Esophagus squamous epithelium (tissue), 5 donors: ENCODE measurements at regions of chr11 and their contacts with region 1.

Region 1: GRCh38 chr11:65418711-65419459 is 3.7 kb upstream of the NEAT1 start:
- DNase-seq: peak; percentile 94
- H3K4me3 ChIP-seq: peak overlapping the region; percentile 5 to 95 (median 84)
- H3K27ac ChIP-seq: peak overlapping the region; percentile 99 to 100 (median 100)
- H3K4me1 ChIP-seq: peaks cover 44 to 65% (median 50%) of the 10 kb centered on the region in 3 donors
- H3K27me3 ChIP-seq: no peaks in the 10 kb centered on the region
- CTCF ChIP-seq: peak in 2 of 6 experiments; percentile 3 to 4
- POLR2A ChIP-seq: peak in 3 of 4 donors; percentile 13 to 88 (median 80)

Region 2: GRCh38 chr11:65095974-65096806 is 322.7 kb before region 1 on chr11 and contains the start of gene VPS51:
- intact Hi-C with region 1: no loop called
- DNase-seq: peak; percentile 54
- H3K4me3 ChIP-seq: peak within 1 kb of the TSS; percentile 87 to 98 (median 92)
- H3K27ac ChIP-seq: peak within 1 kb of the TSS; percentile 94 to 97 (median 95)
- H3K4me1 ChIP-seq: peaks cover 17 to 34% (median 18%) of the 10 kb centered on the region in 3 donors
- H3K27me3 ChIP-seq: no peaks in the 10 kb centered on the region
- CTCF ChIP-seq: peak in 4 of 6 experiments; percentile 20 to 76 (median 31)
- POLR2A ChIP-seq: peak in 3 of 4 donors; percentile 34 to 84 (median 62)
- total RNA-seq, gene VPS51: 204 to 298 (median 224) TPM

Region 3: GRCh38 chr11:65382033-65382807 is 36.7 kb before region 1 on chr11 and contains the start of gene SLC25A45:
- intact Hi-C with region 1: loop called (anchors 5 kb)
- DNase-seq: peak; percentile 68
- H3K4me3 ChIP-seq: peak within 1 kb of the TSS; percentile 23 to 68 (median 46)
- H3K27ac ChIP-seq: peak within 1 kb of the TSS; percentile 95 to 99 (median 98)
- H3K4me1 ChIP-seq: peaks cover 34 to 83% (median 59%) of the 10 kb centered on the region in 3 donors
- H3K27me3 ChIP-seq: no peaks in the 10 kb centered on the region
- CTCF ChIP-seq: peak; percentile 73 to 98 (median 96)
- POLR2A ChIP-seq: peak in 3 of 4 donors; percentile 38 to 76 (median 59)
- total RNA-seq, gene SLC25A45: 1.9 to 7.7 (median 4.0) TPM

Region 4: DNA sequence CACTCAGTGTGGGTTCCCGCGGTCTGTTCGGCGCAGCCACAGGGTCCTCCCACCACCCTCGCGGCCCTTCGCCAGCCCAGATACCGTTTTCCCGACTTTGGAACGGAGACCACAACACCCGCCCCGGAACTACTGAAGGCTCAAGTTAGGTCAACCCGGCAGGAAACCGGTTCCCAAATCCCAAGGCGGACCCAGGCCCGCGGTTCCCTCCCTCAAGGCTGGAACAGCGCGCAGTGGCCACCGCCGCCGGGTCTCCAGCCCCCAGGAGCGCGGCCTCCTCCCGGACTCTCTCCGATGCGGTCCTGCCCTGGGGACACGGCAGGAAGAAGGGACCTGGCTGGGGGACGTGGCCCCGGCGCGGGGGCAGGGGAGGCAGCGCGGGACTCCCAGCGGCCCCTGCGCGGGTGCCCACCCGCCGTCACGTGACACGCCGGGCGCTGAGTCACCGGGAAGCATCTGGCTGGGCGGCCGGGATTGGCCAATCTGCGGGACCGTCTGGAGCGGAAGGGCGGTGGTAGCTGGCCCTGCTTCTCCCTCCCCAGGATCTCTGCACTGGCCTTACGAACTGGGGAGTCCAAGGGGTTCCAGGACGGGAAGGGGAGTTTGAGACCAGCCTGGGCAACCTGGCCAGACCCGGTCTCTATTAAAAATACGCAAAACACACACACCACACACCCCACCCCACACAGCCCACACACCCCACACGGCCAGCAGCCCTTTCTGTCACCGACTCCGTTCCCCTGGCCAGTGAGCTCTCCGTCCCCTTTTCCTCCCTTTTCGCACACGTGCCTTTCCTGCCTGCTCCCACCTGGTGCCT is 58.5 kb after region 1 on chr11:
- intact Hi-C with region 1: loop called (anchors 10 kb)
- DNase-seq: peak; percentile 78
- H3K4me3 ChIP-seq: peak overlapping the region; percentile 66 to 89 (median 74)
- H3K27ac ChIP-seq: peak overlapping the region; percentile 98 to 100 (median 100)
- H3K4me1 ChIP-seq: peaks cover 37 to 81% (median 64%) of the 10 kb centered on the region in 3 donors
- H3K27me3 ChIP-seq: no peaks in the 10 kb centered on the region
- CTCF ChIP-seq: peak in 1 of 6 experiments; percentile 27
- POLR2A ChIP-seq: peak in 3 of 4 donors; percentile 91 to 99 (median 93)

Region 5: DNA sequence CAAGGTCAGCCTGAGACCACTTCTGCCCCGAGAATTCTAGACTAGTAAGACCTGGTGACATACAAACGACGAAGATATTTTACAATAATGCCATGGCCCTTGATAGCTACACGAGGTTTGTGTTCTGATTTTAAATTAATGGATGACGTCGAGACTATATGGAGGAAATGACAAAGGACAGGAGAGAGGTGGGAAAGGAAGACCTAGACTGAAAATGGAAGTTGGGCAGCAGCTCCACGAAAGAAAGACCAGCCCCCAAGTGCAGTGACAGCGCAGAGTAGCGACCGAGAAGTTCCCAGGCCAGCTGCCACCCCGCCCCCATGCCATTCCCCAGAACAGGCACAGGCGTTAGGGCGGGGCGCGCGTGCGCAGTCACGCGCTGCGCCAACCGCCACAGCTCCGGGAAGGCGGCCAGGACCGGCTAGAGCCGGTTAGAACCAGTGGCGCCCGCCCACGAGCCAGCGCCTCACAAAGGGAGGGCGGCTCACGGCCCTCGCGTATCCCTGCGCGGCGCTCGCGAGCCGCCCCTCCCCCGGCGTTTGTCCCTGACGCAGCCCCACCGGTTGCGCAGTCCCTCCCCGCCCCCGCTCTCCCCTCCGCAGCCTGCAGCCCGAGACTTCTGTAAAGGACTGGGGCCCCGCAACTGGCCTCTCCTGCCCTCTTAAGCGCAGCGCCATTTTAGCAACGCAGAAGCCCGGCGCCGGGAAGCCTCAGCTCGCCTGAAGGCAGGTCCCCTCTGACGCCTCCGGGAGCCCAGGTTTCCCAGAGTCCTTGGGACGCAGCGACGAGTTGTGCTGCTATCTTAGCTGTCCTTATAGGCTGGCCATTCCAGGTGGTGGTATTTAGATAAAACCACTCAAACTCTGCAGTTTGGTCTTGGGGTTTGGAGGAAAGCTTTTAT is 78.5 kb after region 1 on chr11:
- intact Hi-C with region 1: loop called (anchors 2 kb)
- DNase-seq: peak; percentile 92
- H3K4me3 ChIP-seq: peak overlapping the region; percentile 47 to 96 (median 76)
- H3K27ac ChIP-seq: peak overlapping the region; percentile 95 to 100 (median 98)
- H3K4me1 ChIP-seq: peaks cover 41 to 48% (median 45%) of the 10 kb centered on the region in 3 donors
- H3K27me3 ChIP-seq: no peaks in the 10 kb centered on the region
- CTCF ChIP-seq: peak in 2 of 6 experiments; percentile 18 to 34
- POLR2A ChIP-seq: peak in 3 of 4 donors; percentile 63 to 91 (median 89)

Region 6: DNA sequence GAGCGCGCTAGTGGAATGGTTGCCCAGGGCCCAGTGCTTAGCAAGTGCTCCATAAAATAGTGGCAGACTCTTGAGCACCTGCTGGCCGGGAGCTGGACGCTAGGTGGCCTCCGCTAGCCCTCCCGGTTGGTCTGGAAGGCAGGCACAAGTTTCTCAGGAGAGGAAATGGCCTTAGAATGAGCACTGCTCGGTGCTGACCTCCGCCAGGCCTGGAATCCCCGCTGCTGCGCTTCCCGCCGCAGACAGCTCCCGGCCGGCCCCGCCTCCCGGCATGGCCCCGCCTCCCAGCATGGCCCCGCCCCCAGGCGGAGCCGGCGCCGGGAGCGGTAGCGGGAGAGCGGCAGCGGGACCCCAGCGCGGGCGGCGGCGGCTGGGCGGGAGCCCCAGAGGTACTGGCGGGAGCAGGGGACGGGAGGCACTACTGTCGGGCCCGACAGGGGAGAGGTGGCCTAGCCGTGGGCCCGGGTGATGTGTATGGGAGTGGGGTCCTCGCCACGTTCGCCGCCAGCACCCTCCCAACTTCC is 219.0 kb after region 1 on chr11 and contains the start of gene SIPA1:
- intact Hi-C with region 1: no loop called
- DNase-seq: no peak
- H3K4me3 ChIP-seq: peak within 1 kb of the TSS; percentile 45 to 87 (median 80)
- H3K27ac ChIP-seq: peak within 1 kb of the TSS; percentile 74 to 95 (median 94)
- H3K4me1 ChIP-seq: peaks cover 32 to 77% (median 34%) of the 10 kb centered on the region in 3 donors
- H3K27me3 ChIP-seq: no peaks in the 10 kb centered on the region
- CTCF ChIP-seq: peak in 4 of 6 experiments; percentile 13 to 39 (median 29)
- POLR2A ChIP-seq: peak in 2 of 4 donors; percentile 69 to 87
- total RNA-seq, gene SIPA1: 7.8 to 29.2 (median 27.5) TPM